Activated naive CD4-positive, alpha-beta T cell treated with anti-CD3 and anti-CD28 coated beads for 36 hours (primary cell): ENCODE measurements at regions of chr17 and their contacts with region 1.

Region 1: DNA sequence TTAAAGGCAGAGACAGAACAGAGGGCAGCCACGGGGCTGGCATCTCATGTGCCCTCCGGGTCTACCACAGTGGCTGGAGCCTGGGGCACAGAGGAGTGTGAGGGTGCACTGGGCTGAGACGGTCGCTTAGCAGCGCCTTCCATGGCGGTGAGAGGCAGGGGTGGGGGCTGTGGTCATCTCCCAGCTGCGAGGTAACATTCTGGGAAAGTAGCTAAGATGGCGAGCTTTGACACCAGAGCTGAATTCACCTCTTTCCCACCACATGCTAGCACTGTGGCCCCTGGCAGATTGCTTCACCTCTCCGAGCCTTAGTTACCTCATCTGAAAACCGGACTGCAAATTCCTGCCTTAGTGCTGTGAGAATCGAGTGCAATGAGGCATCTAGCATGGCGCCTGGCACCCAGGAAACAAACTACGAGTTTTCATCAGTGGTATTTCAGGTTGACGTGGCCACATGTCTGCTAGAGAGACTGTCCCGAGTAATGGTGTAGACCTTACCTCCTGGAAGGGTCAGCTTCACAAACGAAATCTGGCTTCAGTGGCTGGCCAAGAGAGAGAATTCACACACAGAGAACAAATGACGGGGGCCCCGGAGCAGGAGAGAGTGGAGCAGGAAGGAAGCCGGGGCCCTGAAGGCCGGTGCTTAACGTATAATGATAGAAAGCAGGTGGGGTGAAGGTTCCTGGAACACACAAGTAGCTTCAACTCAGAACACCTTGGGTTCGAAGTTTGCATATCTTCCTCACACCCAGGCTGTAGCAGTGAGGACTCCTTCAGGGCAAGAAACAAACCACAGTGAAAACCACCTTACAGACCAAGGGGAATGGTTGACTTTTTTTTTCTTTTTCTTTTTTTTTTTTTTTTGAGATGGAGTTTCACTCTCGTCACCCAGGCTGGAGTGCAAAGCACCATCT is 63.9 kb upstream of the RPH3AL start:
- DNase-seq: peak; percentile 78
- H3K4me3 Mint-ChIP-seq: peak overlapping the region; percentile 91
- H3K27ac Mint-ChIP-seq: peak overlapping the region; percentile 100
- H3K4me1 Mint-ChIP-seq: peaks cover 77% of the 10 kb centered on the region
- H3K27me3 Mint-ChIP-seq: no peaks in the 10 kb centered on the region

Region 2: DNA sequence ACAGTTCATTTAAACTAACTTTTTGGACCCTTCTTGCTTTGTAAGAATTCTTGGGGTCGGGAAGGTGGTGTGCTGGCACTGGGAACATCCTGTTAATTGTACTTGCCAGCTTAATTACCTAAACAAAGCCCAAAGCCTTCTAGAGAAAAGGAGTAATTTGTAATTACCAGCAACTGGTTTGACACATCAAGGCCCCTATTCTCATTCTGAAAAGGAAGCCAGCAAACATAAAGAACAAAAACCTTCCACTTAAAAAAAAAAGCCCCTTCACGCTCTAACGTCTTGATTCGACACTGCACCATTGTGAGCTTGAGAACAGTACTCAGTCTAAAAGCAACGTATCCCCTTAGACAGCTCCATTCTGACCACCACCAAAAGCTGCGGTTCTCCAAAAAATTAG is 10.8 kb after region 1 on chr17:
- CTCF ChIA-PET with region 1: interaction called, 11 read pairs
- intact Hi-C with region 1: loop called (anchors 1 kb)
- DNase-seq: no peak
- H3K4me3 Mint-ChIP-seq: no peak overlapping the region
- H3K27ac Mint-ChIP-seq: peak overlapping the region; percentile 41
- H3K4me1 Mint-ChIP-seq: peaks cover 13% of the 10 kb centered on the region
- H3K27me3 Mint-ChIP-seq: no peaks in the 10 kb centered on the region

Region 3: DNA sequence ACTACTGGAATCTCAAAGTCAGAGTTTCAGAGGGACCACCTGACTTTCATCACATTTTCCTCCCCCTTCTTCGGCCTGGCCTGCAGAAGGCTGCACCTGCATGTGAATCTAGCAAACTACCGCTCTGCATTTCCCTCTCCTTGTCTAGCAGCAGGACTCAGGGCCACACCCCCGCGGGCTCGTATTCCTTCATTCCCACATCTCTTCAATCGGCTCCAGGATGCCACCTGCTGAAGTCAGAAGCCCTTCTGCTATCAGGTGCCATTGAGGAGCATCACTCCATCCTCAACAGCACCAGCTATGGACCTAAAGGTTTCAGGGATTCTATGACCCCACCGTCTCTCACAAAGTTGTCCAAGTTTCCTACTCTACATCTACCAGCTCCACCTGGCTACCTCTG is 128.6 kb after region 1 on chr17:
- CTCF ChIA-PET with region 1: interaction called, 12 read pairs
- intact Hi-C with region 1: loop called (anchors 2 kb)
- DNase-seq: no peak
- H3K4me3 Mint-ChIP-seq: no peak overlapping the region
- H3K27ac Mint-ChIP-seq: no peak overlapping the region
- H3K4me1 Mint-ChIP-seq: peaks cover 6% of the 10 kb centered on the region
- H3K27me3 Mint-ChIP-seq: no peaks in the 10 kb centered on the region